Natural killer cell (primary cell): ENCODE measurements at regions of chr11 and their contacts with region 1.

Region 1: GRCh38 chr11:120229451-120230424 is 10.2 kb upstream of the POU2F3 start:
- DNase-seq: peak in 1 of 2 donors; percentile 46
- ATAC-seq: peak in 1 of 3 donors; percentile 36
- H3K4me3 ChIP-seq: no peak overlapping the region
- H3K4me3 Mint-ChIP-seq: no peak overlapping the region
- H3K27ac ChIP-seq: no peak overlapping the region
- H3K27ac Mint-ChIP-seq: no peak overlapping the region
- H3K4me1 ChIP-seq: peaks cover 8% of the 10 kb centered on the region
- H3K4me1 Mint-ChIP-seq: peaks cover under 1 to 6% of the 10 kb centered on the region in 2 donors
- H3K27me3 ChIP-seq: no peaks in the 10 kb centered on the region
- H3K27me3 Mint-ChIP-seq: peaks cover 5 to 11% of the 10 kb centered on the region in 2 donors
- CTCF ChIP-seq: peak; percentile 47

Region 2: GRCh38 chr11:119709638-119710346 is 519.9 kb before region 1 on chr11:
- intact Hi-C with region 1: no loop called
- DNase-seq: no peak
- ATAC-seq: peak in 1 of 3 donors; percentile 54
- H3K4me3 ChIP-seq: no peak overlapping the region
- H3K4me3 Mint-ChIP-seq: no peak overlapping the region
- H3K27ac ChIP-seq: no peak overlapping the region
- H3K27ac Mint-ChIP-seq: no peak overlapping the region
- H3K4me1 ChIP-seq: peaks cover 13% of the 10 kb centered on the region
- H3K4me1 Mint-ChIP-seq: peaks cover 13 to 32% of the 10 kb centered on the region in 2 donors
- H3K27me3 ChIP-seq: peaks cover 6% of the 10 kb centered on the region
- H3K27me3 Mint-ChIP-seq: peaks cover 62 to 64% of the 10 kb centered on the region in 2 donors
- CTCF ChIP-seq: no peak

Region 3: GRCh38 chr11:120172054-120172911 is 57.5 kb before region 1 on chr11:
- intact Hi-C with region 1: loop called (anchors 1 kb)
- DNase-seq: peak; percentile 25 to 62
- ATAC-seq: peak; percentile 43 to 64 (median 48)
- H3K4me3 ChIP-seq: no peak overlapping the region
- H3K4me3 Mint-ChIP-seq: peak overlapping the region; percentile 42
- H3K27ac ChIP-seq: no peak overlapping the region
- H3K27ac Mint-ChIP-seq: no peak overlapping the region
- H3K4me1 ChIP-seq: peaks cover 20% of the 10 kb centered on the region
- H3K4me1 Mint-ChIP-seq: peaks cover 0 to 12% of the 10 kb centered on the region in 2 donors
- H3K27me3 ChIP-seq: peaks cover 16% of the 10 kb centered on the region
- H3K27me3 Mint-ChIP-seq: peaks cover 52 to 59% of the 10 kb centered on the region in 2 donors
- CTCF ChIP-seq: peak; percentile 70